Body of pancreas (tissue), 4 donors: ENCODE measurements at regions of chr5 and their contacts with region 1.

Region 1: GRCh38 chr5:142821733-142822487 is 51.7 kb downstream of the ARHGAP26 start:
- DNase-seq: no peak
- ATAC-seq: no peak
- H3K4me3 ChIP-seq: no peak overlapping the region
- H3K27ac ChIP-seq: peak overlapping the region in 1 of 4 donors; percentile 19
- H3K4me1 ChIP-seq: peaks cover 45% of the 10 kb centered on the region
- H3K27me3 ChIP-seq: no peaks in the 10 kb centered on the region
- CTCF ChIP-seq: no peak
- POLR2A ChIP-seq: no peak

Region 2: DNA sequence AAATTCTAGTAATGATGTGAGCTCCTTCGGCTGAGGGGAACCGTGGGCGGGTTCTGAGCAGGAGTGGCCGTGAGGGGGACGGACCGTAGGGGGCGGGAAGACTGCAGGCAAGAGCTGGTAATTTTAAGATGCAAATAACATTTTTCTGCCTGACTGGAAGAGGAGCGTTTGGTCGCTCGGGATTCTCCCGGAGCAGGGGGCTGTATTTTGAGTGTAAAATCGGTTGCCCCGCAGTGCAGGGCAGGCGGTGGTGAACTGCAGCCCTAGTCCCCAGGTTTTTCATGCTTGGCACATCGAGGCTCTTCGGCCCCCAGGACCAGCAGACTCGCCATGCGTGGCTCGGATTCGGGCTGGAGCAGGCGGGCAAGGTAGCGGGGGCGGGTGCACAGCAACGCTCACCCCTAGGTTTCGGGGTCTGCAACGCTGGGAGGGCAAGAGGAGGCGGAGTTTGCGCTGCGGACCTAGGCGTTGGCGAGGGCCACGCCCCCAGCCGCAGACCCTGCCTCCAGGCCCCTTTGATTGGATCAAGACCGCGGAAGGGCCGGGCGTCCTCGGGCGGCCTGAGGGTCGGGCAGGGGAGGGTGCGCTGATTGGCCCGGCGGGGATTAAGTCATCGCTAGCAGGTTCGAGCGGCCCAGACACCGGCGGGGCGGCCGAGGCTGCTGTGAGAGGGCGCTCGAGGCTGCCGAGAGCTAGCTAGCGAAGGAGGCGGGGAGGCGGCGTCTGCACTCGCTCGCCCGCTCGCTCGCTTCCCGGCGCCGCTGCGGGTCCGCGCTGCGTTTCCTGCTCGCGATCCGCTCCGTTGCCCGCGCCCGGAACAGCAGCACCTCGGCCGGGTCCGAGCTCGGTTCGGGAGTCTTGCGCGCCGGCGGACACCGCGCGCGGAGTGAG is 51.9 kb before region 1 on chr5 and contains the start of gene ARHGAP26:
- intact Hi-C with region 1: loop called (anchors 10 kb)
- DNase-seq: peak; percentile 97 to 98 (median 98)
- ATAC-seq: peak; percentile 97
- H3K4me3 ChIP-seq: peak within 1 kb of the TSS; percentile 47 to 63
- H3K27ac ChIP-seq: peak within 1 kb of the TSS; percentile 60 to 94 (median 80)
- H3K4me1 ChIP-seq: peaks cover 21% of the 10 kb centered on the region
- H3K27me3 ChIP-seq: no peaks in the 10 kb centered on the region
- CTCF ChIP-seq: peak in 5 of 7 experiments; percentile 15 to 45 (median 33)
- POLR2A ChIP-seq: peak; percentile 98 to 99 (median 98)
- total RNA-seq, gene ARHGAP26: 12.5 to 14.2 TPM